ENCODE measurements at regions of chr9 and their contacts with region 1.

Region 1: GRCh38 chr9:92439921-92440750 is 15.9 kb upstream of the OMD start:
- DNase-seq: no peak
- ATAC-seq: no peak
- H3K4me3 ChIP-seq: no peak overlapping the region
- H3K27ac ChIP-seq: no peak overlapping the region
- H3K4me1 ChIP-seq: no peaks in the 10 kb centered on the region
- H3K27me3 ChIP-seq: no peaks in the 10 kb centered on the region
- CTCF ChIP-seq: no peak
- POLR2A ChIP-seq: no peak

Region 2: GRCh38 chr9:92140074-92140753 is 299.9 kb before region 1 on chr9:
- intact Hi-C with region 1: loop called in 1 of 2 experiments (anchors 10 kb)
- DNase-seq: peak; percentile 86 to 90 (median 86)
- ATAC-seq: peak; percentile 86 to 92 (median 90)
- H3K4me3 ChIP-seq: peak overlapping the region in 1 of 3 donors; percentile 48
- H3K27ac ChIP-seq: no peak overlapping the region
- H3K4me1 ChIP-seq: peaks cover 0 to 13% (median 5%) of the 10 kb centered on the region in 4 donors
- H3K27me3 ChIP-seq: no peaks in the 10 kb centered on the region
- CTCF ChIP-seq: peak; percentile 76 to 97 (median 94)
- POLR2A ChIP-seq: no peak

Measured in right lobe of liver (tissue), 6 donors.